ENCODE measurements at regions of chr10 and their contacts with region 1.

Region 1: DNA sequence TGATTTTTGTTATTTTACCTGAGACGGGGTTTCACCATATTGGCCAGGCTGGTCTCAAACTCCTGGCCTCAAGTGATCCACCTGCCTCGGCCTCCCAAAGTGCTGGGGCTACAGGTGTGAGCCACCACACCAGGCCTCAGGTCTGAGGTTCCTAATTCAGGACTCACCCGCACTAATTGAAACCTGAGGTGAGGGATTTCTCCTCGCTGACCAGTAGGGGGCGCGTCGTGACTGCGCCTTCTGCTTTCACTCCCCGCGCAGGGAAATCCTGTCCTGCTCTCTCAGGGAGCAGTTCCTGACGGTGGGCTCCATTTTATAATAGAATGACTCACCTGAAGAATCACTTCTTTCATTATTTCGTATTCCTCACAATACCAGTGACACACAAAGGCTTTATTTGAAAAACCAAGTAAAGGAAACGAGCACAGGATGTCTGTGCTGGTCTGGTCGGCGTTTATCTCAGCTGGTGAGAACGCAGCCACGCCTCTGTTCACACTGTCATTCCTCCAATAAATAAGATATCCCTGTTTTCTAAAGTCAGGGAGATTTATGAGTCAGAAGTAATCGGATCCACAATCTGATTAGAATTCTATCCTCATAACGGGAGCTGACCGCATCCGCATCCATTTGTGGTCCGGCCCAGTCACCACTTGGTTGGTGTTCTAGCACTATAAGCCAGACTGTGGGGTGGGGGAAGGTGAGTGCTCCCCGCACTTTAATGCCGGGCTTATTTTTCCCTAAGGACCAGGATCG is 35.4 kb downstream of the BAG3 start:
- DNase-seq: peak; percentile 50 to 84 (median 69)
- H3K4me3 ChIP-seq: peak overlapping the region in 54 of 59 donors; percentile 5 to 68 (median 42)
- H3K27ac ChIP-seq: peak overlapping the region in 55 of 59 donors; percentile 2 to 85 (median 68)
- H3K27me3 ChIP-seq: no peaks in the 10 kb centered on the region
- CTCF ChIP-seq: peak; percentile 89 to 100 (median 96)

Region 2: GRCh38 chr10:118594392-118595063 is 1092.1 kb before region 1 on chr10:
- intact Hi-C with region 1: no loop called
- DNase-seq: peak in 4 of 10 donors; percentile 20 to 36 (median 26)
- H3K4me3 ChIP-seq: peak overlapping the region in 32 of 59 donors; percentile 5 to 59 (median 44)
- H3K27ac ChIP-seq: no peak overlapping the region
- H3K27me3 ChIP-seq: peaks cover 8 to 85% (median 56%) of the 10 kb centered on the region in 45 donors
- CTCF ChIP-seq: peak in 52 of 56 donors; percentile 22 to 69 (median 52)

Region 3: DNA sequence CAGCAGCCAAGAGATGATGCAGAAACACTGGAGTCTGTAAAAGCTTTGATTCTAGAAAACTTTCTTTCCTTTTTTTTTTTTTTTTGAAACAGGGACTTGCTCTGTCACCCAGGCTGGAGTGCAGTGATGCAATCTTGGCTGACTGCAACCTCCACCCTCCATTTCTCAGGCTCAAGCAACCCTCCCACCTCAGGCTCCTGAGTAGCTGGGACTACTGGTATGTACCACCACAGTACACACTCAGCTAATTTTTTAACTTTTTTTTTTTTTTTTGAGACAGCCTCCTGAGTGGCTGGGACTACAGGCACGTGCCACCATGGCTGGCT is 52.4 kb before region 1 on chr10:
- intact Hi-C with region 1: no loop called
- DNase-seq: peak in 1 of 10 donors; percentile 16
- H3K4me3 ChIP-seq: no peak overlapping the region
- H3K27ac ChIP-seq: peak overlapping the region in 20 of 59 donors; percentile 7 to 65 (median 42)
- H3K27me3 ChIP-seq: no peaks in the 10 kb centered on the region
- CTCF ChIP-seq: no peak

Region 4: GRCh38 chr10:119725828-119726675 is 39.4 kb after region 1 on chr10 and contains the start of gene INPP5F:
- intact Hi-C with region 1: loop called (anchors 2 to 5 kb)
- DNase-seq: peak; percentile 94 to 99 (median 98)
- H3K4me3 ChIP-seq: peak within 1 kb of the TSS; percentile 59 to 99 (median 85)
- H3K27ac ChIP-seq: peak within 1 kb of the TSS; percentile 63 to 96 (median 91)
- H3K27me3 ChIP-seq: no peaks in the 10 kb centered on the region
- CTCF ChIP-seq: peak in 48 of 56 donors; percentile 26 to 73 (median 50)
- total RNA-seq, gene INPP5F: 46.3 to 226 (median 146) TPM

Region 5: GRCh38 chr10:119742947-119743648 is 56.5 kb after region 1 on chr10:
- intact Hi-C with region 1: loop called in 1 of 2 experiments (anchors 10 kb)
- DNase-seq: no peak
- H3K4me3 ChIP-seq: no peak overlapping the region
- H3K27ac ChIP-seq: no peak overlapping the region
- H3K27me3 ChIP-seq: no peaks in the 10 kb centered on the region
- CTCF ChIP-seq: no peak

Region 6: GRCh38 chr10:119750391-119751230 is 64.0 kb after region 1 on chr10:
- intact Hi-C with region 1: loop called (anchors 2 to 10 kb)
- DNase-seq: peak in 9 of 10 donors; percentile 76 to 90 (median 79)
- H3K4me3 ChIP-seq: peak overlapping the region in 40 of 59 donors; percentile 1 to 53 (median 30)
- H3K27ac ChIP-seq: peak overlapping the region in 58 of 59 donors; percentile 1 to 90 (median 77)
- H3K27me3 ChIP-seq: no peaks in the 10 kb centered on the region
- CTCF ChIP-seq: peak; percentile 48 to 98 (median 90)

Region 7: DNA sequence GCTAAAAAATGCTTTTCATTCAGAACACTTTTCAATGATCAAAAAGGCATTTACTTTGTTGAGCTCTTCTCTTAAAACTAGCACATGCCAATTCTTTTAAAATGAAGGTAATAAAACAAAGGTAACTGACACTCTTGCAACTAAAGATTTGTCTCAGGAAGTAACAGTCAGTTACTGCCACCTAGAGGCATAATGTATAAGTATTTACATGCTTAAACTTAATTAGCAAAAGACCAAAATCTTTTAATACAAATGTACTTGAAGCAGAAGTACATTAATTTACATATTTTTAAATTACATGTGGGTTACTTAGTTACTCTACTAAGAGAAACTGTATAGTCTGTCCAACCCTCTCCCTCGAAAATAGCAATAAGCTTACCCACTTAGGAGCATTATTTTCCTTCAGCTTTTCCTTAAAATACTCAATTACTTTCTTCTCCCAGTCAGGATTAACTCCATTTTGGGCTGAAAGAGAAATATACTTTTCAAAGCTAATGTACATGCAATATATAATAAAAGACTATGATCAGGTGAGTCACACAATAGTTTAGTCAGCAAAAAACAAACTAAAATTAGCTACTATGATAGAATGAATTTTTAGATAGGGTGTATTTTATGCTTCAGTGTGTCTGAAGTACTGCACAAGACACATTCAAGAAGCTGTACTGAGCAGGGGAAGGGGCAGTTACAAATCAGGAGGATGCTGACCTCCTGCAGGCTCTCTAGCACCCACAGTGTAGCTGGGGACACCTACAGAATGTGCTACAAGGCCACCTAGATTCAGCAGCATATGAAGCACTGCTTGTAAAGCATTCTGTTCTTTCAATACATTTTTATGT is 173.0 kb after region 1 on chr10:
- intact Hi-C with region 1: loop called (anchors 1 to 5 kb)
- DNase-seq: no peak
- H3K4me3 ChIP-seq: no peak overlapping the region
- H3K27ac ChIP-seq: peak overlapping the region in 2 of 59 donors; percentile 12 to 16
- H3K27me3 ChIP-seq: no peaks in the 10 kb centered on the region
- CTCF ChIP-seq: peak; percentile 59 to 94 (median 74)